ENCODE measurements at regions of chr10 and their contacts with region 1.

Region 1: GRCh38 chr10:60974463-60975149 is 30.6 kb upstream of the RHOBTB1 start:
- DNase-seq: no peak
- ATAC-seq: peak; percentile 57; the same call in 1 of the 2 replicates
- H3K4me3 ChIP-seq: 0 out of 4 replicates have a peak overlapping the region, but pooled peaks of 1 of the 2 experiments have one; percentile 10
- H3K27ac ChIP-seq: no peak overlapping the region
- H3K4me1 ChIP-seq: peaks cover 12 to 29% of the 10 kb centered on the region in 2 experiments
- H3K27me3 ChIP-seq: no peaks in the 10 kb centered on the region
- CTCF ChIP-seq: no peak
- POLR2A ChIP-seq: no peak
- RAD21 ChIP-seq: no peak

Region 2: DNA sequence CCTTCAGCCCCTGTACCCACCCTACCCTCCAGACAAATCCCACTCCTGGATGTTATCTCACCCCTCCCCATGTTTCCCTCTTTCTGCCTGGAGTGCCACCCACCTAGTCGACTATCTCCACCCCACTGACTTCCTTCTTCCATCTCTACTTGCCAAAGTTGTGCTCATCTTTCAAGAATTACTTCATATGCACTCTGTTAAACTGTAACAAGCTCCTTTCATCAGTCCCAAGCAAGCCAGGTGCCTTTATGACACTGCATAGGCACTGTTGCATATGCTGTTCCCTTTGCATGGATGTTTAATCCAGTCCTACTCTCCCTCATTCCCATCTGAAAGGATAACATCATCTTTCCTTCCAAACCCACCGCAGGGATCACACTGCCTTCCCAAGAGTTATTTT is 205.2 kb before region 1 on chr10:
- CTCF ChIA-PET with region 1: no interaction called
- POLR2A ChIA-PET with region 1: no interaction called
- RAD21 ChIA-PET with region 1: no interaction called
- intact Hi-C with region 1: no loop called
- DNase-seq: no peak
- ATAC-seq: peak; percentile 22; the same call in 1 of the 2 replicates
- H3K4me3 ChIP-seq: no peak overlapping the region
- H3K27ac ChIP-seq: no peak overlapping the region
- H3K4me1 ChIP-seq: no peaks in the 10 kb centered on the region; a peak in 1 of 4 replicates
- H3K27me3 ChIP-seq: no peaks in the 10 kb centered on the region
- CTCF ChIP-seq: no peak
- POLR2A ChIP-seq: no peak
- RAD21 ChIP-seq: no peak

Region 3: DNA sequence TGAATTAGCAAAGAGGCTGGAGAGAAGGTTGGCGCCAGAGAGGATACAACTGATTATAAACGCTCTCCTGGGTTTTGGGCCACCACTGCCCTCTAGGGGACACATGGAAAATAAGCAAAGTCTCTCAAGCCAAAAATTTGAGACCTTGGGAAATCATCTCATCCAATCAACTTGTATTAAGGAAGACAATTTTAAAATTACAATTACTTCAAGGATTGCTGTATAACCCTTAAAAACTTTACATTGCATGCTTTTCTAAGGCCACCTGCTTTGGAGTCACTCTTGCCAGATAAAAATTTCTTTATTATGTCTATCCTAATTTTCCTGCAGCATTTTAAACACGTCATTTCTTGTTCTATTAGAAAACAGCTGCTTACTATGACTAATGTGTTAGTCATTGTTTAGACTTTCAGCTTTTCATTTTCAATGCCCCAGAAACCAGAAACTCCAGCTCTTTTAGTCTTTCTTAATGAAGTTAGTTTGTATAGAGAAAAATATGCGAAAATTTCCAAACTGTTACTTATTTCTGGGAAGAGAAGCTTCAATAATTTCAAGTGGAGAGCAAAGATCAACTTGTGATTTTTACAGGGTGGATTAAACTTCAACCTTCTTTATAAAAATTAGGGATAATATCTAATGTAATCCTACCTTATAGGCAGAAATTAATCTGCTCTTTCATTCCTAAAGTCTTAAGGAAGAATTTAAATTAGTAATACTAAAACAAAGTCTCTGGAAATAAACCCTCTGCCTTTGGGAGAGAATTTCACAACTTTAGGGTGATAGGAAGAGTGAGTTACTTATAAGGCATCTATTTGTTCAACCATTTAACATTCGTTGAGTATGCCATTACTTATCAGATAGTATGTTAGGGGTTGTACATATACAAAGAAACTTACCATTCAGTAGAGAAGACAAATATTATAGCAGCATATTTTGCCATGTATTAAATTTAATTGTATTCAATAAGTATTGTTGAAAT is 10.1 kb before region 1 on chr10:
- CTCF ChIA-PET with region 1: interaction called, 11 read pairs
- POLR2A ChIA-PET with region 1: no interaction called
- RAD21 ChIA-PET with region 1: no interaction called
- intact Hi-C with region 1: no loop called
- DNase-seq: peak; percentile 73
- ATAC-seq: peak; percentile 87
- H3K4me3 ChIP-seq: peak overlapping the region in 1 of 2 experiments; percentile 5; a peak in 1 of 4 replicates
- H3K27ac ChIP-seq: no peak overlapping the region
- H3K4me1 ChIP-seq: peaks cover 0 to 24% of the 10 kb centered on the region in 2 experiments; a peak in 3 of 4 replicates
- H3K27me3 ChIP-seq: no peaks in the 10 kb centered on the region
- CTCF ChIP-seq: peak; percentile 76 to 84 (median 77); a peak in 5 of 6 replicates
- POLR2A ChIP-seq: no peak
- RAD21 ChIP-seq: peak; percentile 76

Measured in HCT116 (cell line).